ENCODE measurements at regions of chr2 and their contacts with region 1.

Region 1: DNA sequence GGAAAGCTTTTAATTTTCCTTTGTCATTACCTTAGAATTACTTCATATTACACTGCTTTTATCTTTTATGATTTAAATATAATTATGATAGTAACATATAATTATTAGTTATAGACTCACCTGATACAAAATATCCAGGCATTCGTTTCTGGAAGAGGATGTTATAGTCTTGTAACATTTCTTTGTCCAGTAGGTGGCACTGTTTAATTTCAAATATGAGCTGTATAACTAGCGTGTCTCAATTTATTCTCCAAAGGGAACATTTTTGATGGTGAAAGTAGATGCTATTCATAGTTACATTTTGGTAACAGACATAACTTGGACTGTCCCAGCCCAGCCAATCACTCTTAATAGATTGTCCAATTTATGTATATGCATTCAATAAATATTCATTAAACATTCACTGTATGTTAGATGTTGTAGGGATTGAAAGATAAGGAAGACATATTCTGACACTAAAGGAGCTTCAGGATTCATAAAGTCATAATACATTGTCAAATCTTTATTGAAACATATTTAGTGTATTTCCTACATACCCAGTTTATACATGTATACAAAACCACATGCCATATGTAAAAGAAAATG is 19.2 kb downstream of the DAW1 start:
- DNase-seq: peak; percentile 22 to 54
- ATAC-seq: peak; percentile 83 to 87; a peak in 5 of 6 replicates
- H3K4me3 ChIP-seq: no peak overlapping the region
- H3K27ac ChIP-seq: peak overlapping the region in 1 of 2 experiments; percentile 58; a peak in 1 of 6 replicates
- H3K4me1 ChIP-seq: peaks cover 6% of the 10 kb centered on the region; the same call in 2 of the 3 replicates
- CTCF ChIP-seq: peak; percentile 80
- EP300 ChIP-seq: no peak
- POLR2A ChIP-seq: no peak
- RAD21 ChIP-seq: peak; percentile 75 to 83

Region 2: DNA sequence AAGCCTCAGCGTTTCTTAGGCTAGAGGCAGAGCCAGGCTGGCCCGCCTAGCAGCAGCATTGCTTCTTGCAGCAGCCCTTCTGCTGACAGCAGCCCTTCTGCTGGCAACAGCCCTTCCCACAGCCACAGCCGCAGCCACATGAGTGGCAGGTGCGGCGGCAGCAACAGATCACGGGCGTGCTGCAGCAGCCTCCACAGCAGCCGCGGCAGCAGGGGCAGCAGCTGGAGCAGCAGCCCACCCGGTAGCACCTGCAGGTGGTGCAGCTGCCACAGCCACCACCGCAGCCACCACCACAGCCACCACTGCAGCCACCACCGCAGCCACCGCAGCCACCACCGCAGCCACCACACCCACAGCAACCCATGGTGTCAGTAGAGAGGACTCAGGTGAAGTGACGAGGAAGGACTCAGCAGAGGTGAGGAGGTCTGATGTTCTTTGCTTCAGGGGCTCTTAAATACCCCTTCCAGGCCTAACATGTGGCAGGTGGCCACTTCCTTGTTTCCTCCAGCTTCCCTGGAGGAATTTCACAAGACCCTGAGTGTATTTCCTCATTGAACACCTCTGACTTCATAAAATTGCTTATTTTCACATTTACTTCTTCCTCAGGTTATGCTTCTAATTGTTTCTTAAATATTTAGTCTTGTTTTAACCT is 166.1 kb before region 1 on chr2 and contains the start of gene SCYGR6:
- CTCF ChIA-PET with region 1: no interaction called
- POLR2A ChIA-PET with region 1: no interaction called
- DNase-seq: no peak
- ATAC-seq: 0 out of 6 replicates have a peak, but pooled peaks of 1 of the 2 experiments have one; percentile 47
- H3K4me3 ChIP-seq: no peak within 1 kb of the TSS
- H3K27ac ChIP-seq: no peak within 1 kb of the TSS
- H3K4me1 ChIP-seq: peaks cover 10% of the 10 kb centered on the region; the same call in 2 of the 3 replicates
- CTCF ChIP-seq: no peak
- EP300 ChIP-seq: no peak
- POLR2A ChIP-seq: no peak
- RAD21 ChIP-seq: no peak
- polyA plus RNA-seq, gene SCYGR6: not detected in 2 replicates

Region 3: GRCh38 chr2:227877421-227878310 is 12.9 kb before region 1 on chr2:
- CTCF ChIA-PET with region 1: interaction called, 15 read pairs
- POLR2A ChIA-PET with region 1: no interaction called
- DNase-seq: no peak
- ATAC-seq: peak; percentile 28 to 49; a peak in 3 of 6 replicates
- H3K4me3 ChIP-seq: no peak overlapping the region
- H3K27ac ChIP-seq: peak overlapping the region; percentile 79 to 93
- H3K4me1 ChIP-seq: peaks cover 65% of the 10 kb centered on the region
- CTCF ChIP-seq: no peak
- EP300 ChIP-seq: no peak
- POLR2A ChIP-seq: no peak
- RAD21 ChIP-seq: no peak

Region 4: GRCh38 chr2:227903381-227903780 is 12.8 kb after region 1 on chr2:
- CTCF ChIA-PET with region 1: interaction called, 13 read pairs
- POLR2A ChIA-PET with region 1: no interaction called
- DNase-seq: no peak
- ATAC-seq: no peak
- H3K4me3 ChIP-seq: no peak overlapping the region
- H3K27ac ChIP-seq: no peak overlapping the region
- H3K4me1 ChIP-seq: no peaks in the 10 kb centered on the region
- CTCF ChIP-seq: no peak
- EP300 ChIP-seq: no peak
- POLR2A ChIP-seq: no peak
- RAD21 ChIP-seq: no peak

Measured in A549 (cell line).